ENCODE measurements at regions of chr18 and their contacts with region 1.

Region 1: DNA sequence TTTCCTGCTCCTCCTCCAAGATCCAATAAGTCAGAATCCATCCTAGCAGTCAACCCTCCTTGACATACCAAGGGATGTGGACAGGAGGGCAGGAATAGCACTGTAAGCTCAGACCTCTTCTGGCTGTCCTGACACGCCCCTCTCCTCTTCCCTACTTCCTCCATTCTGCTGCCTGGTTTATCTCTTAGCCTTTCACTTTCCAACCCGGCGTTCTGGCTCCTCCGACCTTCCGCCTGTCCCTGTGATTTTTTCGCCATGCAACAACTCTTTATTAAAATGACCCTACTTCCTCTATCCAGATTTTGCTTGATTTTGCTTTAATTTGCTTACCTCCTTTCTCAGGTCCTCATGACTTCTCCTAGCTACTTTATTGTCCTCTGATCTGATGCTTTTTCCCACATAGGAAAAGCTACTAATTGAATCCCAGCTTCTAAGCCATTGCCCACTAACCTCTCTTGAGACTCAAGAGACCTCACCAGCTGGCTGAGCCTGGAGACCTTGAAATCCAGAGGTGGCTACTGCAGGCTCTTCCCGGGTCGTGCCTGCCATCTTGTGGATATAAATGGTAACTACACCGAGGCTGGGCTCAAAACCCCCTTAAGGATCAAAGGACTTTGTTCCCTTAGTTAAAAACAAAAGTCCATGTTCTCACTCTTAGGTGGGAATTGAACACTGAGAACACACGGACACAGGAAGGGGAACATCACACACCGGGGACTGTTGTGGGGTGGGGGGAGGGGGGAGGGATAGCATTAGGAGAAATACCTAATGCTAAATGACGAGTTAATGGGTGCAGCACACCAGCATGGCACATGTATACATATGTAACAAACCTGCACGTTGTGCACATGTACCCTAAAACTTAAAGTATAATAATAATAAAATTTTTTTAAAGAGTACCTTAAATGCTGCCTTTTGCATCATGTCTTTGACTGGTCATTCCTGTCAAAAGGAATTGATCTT is 139.4 kb downstream of the AKAIN1 start:
- DNase-seq: peak; percentile 13 to 70 (median 26)
- ATAC-seq: peak; percentile 25
- H3K4me3 ChIP-seq: no peak overlapping the region
- H3K4me3 Mint-ChIP-seq: no peak overlapping the region
- H3K27ac ChIP-seq: no peak overlapping the region
- H3K27ac Mint-ChIP-seq: peak overlapping the region; percentile 40
- H3K4me1 ChIP-seq: peaks cover 18% of the 10 kb centered on the region
- H3K4me1 Mint-ChIP-seq: peaks cover 23% of the 10 kb centered on the region
- H3K27me3 ChIP-seq: no peaks in the 10 kb centered on the region
- H3K27me3 Mint-ChIP-seq: peaks cover 8% of the 10 kb centered on the region
- CTCF ChIP-seq: peak; percentile 68

Region 2: GRCh38 chr18:3771121-3771971 is 1286.3 kb before region 1 on chr18:
- CTCF ChIA-PET with region 1: no interaction called
- POLR2A ChIA-PET with region 1: no interaction called
- intact Hi-C with region 1: loop called in 1 of 2 experiments (anchors 2 kb)
- DNase-seq: peak; percentile 41 to 81 (median 60)
- ATAC-seq: peak; percentile 98
- H3K4me3 ChIP-seq: peak overlapping the region; percentile 28
- H3K4me3 Mint-ChIP-seq: peak overlapping the region; percentile 64
- H3K27ac ChIP-seq: no peak overlapping the region
- H3K27ac Mint-ChIP-seq: no peak overlapping the region
- H3K4me1 ChIP-seq: peaks cover 9% of the 10 kb centered on the region
- H3K4me1 Mint-ChIP-seq: peaks cover 14% of the 10 kb centered on the region
- H3K27me3 ChIP-seq: peaks cover 0 to 12% of the 10 kb centered on the region in 2 experiments
- H3K27me3 Mint-ChIP-seq: peaks cover 46% of the 10 kb centered on the region
- CTCF ChIP-seq: peak; percentile 75

Region 3: GRCh38 chr18:4106407-4107033 is 951.1 kb before region 1 on chr18:
- CTCF ChIA-PET with region 1: interaction called, 10 read pairs
- POLR2A ChIA-PET with region 1: no interaction called
- intact Hi-C with region 1: loop called in 1 of 2 experiments (anchors 1 kb)
- DNase-seq: peak; percentile 14 to 63 (median 40)
- ATAC-seq: no peak
- H3K4me3 ChIP-seq: no peak overlapping the region
- H3K4me3 Mint-ChIP-seq: no peak overlapping the region
- H3K27ac ChIP-seq: no peak overlapping the region
- H3K27ac Mint-ChIP-seq: no peak overlapping the region
- H3K4me1 ChIP-seq: no peaks in the 10 kb centered on the region
- H3K4me1 Mint-ChIP-seq: no peaks in the 10 kb centered on the region
- H3K27me3 ChIP-seq: no peaks in the 10 kb centered on the region
- H3K27me3 Mint-ChIP-seq: peaks cover 6% of the 10 kb centered on the region
- CTCF ChIP-seq: peak; percentile 67

Region 4: DNA sequence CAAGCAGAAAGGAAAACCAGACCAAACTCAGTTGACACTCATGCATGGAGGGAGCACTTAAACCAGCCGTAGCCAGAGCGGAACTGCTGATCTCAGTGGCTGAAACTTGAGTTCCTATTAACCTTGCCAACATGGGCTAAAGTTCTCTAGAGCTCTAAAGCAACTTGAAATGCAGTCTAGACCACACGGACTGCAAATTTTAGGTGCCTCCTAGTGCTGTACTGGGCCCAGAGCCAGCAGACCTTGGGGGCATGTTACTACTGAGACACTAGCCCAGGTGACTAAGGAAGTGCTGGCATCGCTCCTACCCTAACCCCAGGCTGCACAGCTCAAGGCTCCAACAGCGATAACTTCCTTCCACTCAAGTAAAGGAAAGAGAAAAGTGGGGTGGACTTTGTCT is 97.1 kb before region 1 on chr18:
- CTCF ChIA-PET with region 1: no interaction called
- POLR2A ChIA-PET with region 1: no interaction called
- intact Hi-C with region 1: no loop called
- DNase-seq: no peak
- ATAC-seq: no peak
- H3K4me3 ChIP-seq: no peak overlapping the region
- H3K4me3 Mint-ChIP-seq: no peak overlapping the region
- H3K27ac ChIP-seq: no peak overlapping the region
- H3K27ac Mint-ChIP-seq: no peak overlapping the region
- H3K4me1 ChIP-seq: no peaks in the 10 kb centered on the region
- H3K4me1 Mint-ChIP-seq: no peaks in the 10 kb centered on the region
- H3K27me3 ChIP-seq: no peaks in the 10 kb centered on the region
- H3K27me3 Mint-ChIP-seq: no peaks in the 10 kb centered on the region
- CTCF ChIP-seq: no peak